ENCODE measurements at regions of chr3 and their contacts with region 1.

Region 1: DNA sequence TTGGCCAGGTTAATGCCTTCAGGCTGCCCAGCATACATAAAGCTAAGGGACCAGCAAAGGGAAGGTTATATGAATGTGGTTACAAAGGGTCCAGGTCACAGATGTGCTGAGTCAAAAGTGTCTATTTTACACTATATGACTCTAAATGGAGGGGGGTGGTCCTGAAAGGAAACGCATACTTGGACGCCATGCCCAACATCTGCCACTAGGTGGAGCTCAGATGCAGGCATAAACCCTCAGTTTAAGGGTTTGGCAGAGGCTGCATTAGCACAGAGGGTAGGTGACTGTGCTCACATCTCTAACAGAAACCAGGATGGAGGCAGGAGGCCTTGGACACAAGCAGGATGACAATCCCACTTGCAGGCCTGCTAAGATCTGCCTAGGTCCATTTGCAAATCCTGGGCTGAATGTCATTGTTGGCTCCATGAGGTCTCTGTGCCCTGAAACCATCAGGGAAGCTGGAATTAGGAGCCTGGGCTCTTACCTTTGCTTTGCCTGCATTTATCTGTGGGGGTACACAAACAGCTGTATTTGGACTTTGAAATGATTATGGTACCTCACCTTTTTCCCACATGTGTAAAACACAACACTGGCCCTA is 55.8 kb downstream of the ZNF621 start:
- DNase-seq: peak; percentile 54
- ATAC-seq: peak; percentile 84
- H3K4me3 ChIP-seq: no peak overlapping the region
- H3K27ac ChIP-seq: no peak overlapping the region
- H3K4me1 ChIP-seq: no peaks in the 10 kb centered on the region
- H3K27me3 ChIP-seq: peaks cover 5% of the 10 kb centered on the region; the same call in 1 of the 2 replicates
- CTCF ChIP-seq: peak; percentile 86

Region 2: GRCh38 chr3:40329071-40329470 is 251.5 kb before region 1 on chr3:
- CTCF ChIA-PET with region 1: no interaction called
- POLR2A ChIA-PET with region 1: no interaction called
- in situ Hi-C with region 1: no loop called
- intact Hi-C with region 1: loop called (anchors 5 kb)
- DNase-seq: no peak
- ATAC-seq: no peak
- H3K4me3 ChIP-seq: no peak overlapping the region
- H3K27ac ChIP-seq: no peak overlapping the region
- H3K4me1 ChIP-seq: no peaks in the 10 kb centered on the region
- H3K27me3 ChIP-seq: no peaks in the 10 kb centered on the region
- CTCF ChIP-seq: no peak

Region 3: DNA sequence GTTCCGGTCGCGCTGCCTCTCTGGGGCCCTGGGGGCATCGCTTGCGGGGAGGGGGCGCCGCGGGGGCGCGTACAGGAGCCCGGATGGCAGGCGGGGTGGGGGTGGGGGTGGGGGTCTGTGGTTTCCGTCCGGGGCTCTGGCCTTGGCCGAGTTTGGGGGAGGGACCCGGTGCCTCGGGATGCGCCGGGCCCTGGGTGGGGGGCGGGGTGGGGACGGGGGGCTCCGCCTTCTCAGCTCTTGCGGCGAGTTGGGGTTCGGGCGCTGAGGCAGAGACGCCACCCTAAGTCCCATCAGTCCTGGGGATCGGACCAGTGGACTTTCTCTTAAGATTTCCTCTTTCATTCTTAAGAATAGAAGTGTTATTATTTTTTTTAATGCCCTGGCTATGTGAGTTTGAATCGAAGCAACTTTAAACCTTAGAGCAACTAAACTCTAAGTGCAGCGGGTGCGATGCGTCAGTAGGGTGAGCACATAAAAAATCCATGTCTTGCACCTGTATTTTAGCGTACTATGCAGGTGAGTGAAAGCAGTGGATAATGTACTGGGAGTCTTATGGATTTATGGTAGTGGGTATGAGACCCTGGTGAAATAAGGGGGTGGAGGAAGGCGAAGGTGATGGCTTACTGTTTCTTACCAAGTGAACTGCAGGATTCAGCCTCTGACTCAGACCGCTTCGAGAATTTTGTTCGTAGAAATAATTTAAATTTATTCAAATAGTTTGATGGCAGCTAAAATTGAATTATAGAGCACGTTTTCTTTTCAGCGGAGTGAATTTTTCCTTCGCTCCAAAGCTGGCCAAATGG is 619.5 kb after region 1 on chr3:
- CTCF ChIA-PET with region 1: no interaction called
- POLR2A ChIA-PET with region 1: interaction called, 3 read pairs
- in situ Hi-C with region 1: no loop called
- intact Hi-C with region 1: loop called (anchors 5 kb)
- DNase-seq: no peak
- ATAC-seq: peak; percentile 20
- H3K4me3 ChIP-seq: peak overlapping the region; percentile 89 to 94
- H3K27ac ChIP-seq: peak overlapping the region; percentile 85
- H3K4me1 ChIP-seq: peaks cover 24% of the 10 kb centered on the region
- H3K27me3 ChIP-seq: no peaks in the 10 kb centered on the region
- CTCF ChIP-seq: no peak

Region 4: GRCh38 chr3:41881233-41881821 is 1300.7 kb after region 1 on chr3:
- CTCF ChIA-PET with region 1: interaction called, 3 read pairs
- POLR2A ChIA-PET with region 1: no interaction called
- in situ Hi-C with region 1: no loop called
- intact Hi-C with region 1: loop called (anchors 5 kb)
- DNase-seq: peak; percentile 10
- ATAC-seq: no peak
- H3K4me3 ChIP-seq: no peak overlapping the region
- H3K27ac ChIP-seq: no peak overlapping the region
- H3K4me1 ChIP-seq: no peaks in the 10 kb centered on the region
- H3K27me3 ChIP-seq: no peaks in the 10 kb centered on the region
- CTCF ChIP-seq: peak; percentile 60; the same call in 1 of the 2 replicates